ENCODE measurements at regions of chr9 and their contacts with region 1.

Region 1: DNA sequence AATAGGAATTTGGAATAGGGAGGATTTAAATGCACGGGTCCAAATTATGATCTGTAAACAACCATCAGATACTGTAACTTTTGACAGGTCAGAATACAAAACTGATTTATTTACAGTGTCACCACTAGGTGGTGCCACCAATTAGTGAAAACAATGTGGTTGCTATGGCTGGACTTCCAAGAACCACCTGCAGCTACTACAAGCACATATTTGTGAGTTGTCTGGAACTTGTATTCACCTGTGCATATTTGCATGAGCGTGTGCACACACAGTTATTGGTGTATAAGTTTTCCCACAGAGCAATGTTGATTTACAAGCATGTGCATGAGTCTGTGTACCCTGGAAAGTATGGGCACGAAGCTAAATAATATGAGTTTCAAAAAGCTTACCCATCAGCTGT is 3.0 kb upstream of the HRCT1 start:
- DNase-seq: no peak
- H3K4me3 ChIP-seq: no peak overlapping the region
- CTCF ChIP-seq: peak; percentile 46

Region 2: DNA sequence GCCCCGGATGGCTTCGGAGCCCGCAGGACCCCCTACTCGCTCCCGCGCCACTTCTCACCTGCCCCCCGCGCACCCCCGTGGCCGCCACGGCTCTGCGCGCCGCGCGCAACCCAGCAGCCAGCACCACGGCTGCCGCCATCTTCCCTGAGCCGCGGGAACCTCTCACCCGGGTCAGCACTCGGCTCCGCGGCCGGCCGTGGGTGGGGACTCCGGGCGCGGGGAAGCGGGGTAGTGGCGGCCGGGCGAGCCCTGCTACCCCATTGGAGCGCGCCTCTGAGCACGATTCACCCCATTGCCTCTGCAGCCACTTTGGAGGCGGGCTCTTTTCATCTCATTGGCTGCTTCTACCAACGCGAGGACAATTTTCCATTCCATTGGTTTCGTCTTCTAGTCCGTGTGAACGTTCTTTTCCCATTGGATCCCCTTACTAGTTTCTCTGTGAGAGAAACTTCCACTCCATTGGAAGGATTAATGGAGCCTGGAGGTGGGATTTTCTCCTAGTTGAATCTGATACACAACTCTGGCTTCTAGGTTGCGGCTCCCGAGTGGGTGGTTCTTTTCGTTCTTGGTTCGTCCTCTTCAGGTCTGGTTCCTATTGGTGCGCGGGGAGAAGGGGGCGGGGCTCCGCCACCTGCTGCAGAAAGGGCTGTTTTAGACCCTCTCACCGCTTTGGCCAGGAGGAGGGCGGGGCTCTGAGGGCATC is 88.1 kb before region 1 on chr9 and contains the start of gene HINT2:
- CTCF ChIA-PET with region 1: interaction called, 10 read pairs
- POLR2A ChIA-PET with region 1: no interaction called
- DNase-seq: peak; percentile 94
- H3K4me3 ChIP-seq: peak within 1 kb of the TSS; percentile 87
- CTCF ChIP-seq: no peak

Region 3: GRCh38 chr9:35891646-35892045 is 11.4 kb before region 1 on chr9:
- CTCF ChIA-PET with region 1: interaction called, 20 read pairs
- POLR2A ChIA-PET with region 1: no interaction called
- DNase-seq: no peak
- H3K4me3 ChIP-seq: no peak overlapping the region
- CTCF ChIP-seq: no peak

Region 4: GRCh38 chr9:35923927-35924763 is 21.1 kb after region 1 on chr9:
- CTCF ChIA-PET with region 1: interaction called, 137 read pairs
- POLR2A ChIA-PET with region 1: interaction called, 15 read pairs
- DNase-seq: peak; percentile 80
- H3K4me3 ChIP-seq: no peak overlapping the region
- CTCF ChIP-seq: no peak

Region 5: DNA sequence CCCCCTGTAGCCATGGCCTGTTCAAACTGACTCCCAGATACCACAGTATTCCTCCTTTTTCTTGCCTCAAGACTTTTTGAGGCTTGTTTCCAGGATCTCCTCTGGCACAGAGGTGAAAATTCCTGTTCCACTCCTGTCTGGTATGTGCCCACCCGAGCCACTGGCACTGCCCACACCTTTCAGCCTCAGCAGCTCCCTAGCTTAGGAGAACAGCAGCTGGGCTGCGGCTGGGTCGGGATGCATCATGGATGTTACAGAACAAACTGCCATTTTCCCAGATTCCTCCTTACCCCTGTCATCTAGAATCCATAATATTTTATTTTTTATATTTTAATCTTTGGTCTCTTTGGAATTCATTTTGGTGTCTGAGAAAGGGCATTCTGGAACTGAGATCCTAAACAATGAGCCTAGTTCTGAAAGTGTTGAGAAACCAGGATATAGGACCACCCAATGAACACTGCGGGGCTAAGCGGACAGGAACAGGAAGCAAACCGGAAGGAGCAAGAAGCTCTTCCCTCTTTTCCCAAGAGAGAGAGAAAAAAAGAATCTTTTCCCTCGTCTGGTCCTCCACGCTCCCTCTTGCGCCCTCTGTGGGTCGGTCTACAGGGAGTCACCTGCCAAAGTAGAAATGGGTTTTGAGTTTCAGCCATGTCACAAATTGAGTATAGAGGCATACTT is 42.4 kb after region 1 on chr9:
- CTCF ChIA-PET with region 1: interaction called, 207 read pairs
- POLR2A ChIA-PET with region 1: interaction called, 4 read pairs
- DNase-seq: no peak
- H3K4me3 ChIP-seq: no peak overlapping the region
- CTCF ChIP-seq: peak; percentile 86